ENCODE measurements at regions of chr2 and their contacts with region 1.

Region 1: GRCh38 chr2:83196225-83196624 is 1262.9 kb downstream of the SUCLG1 start:
- DNase-seq: peak; percentile 1
- ATAC-seq: peak; percentile 77
- H3K4me3 ChIP-seq: no peak overlapping the region
- H3K27ac ChIP-seq: no peak overlapping the region
- H3K4me1 ChIP-seq: no peaks in the 10 kb centered on the region
- H3K27me3 ChIP-seq: no peaks in the 10 kb centered on the region
- CTCF ChIP-seq: peak; percentile 27 to 68 (median 43); a peak in 5 of 6 replicates
- POLR2A ChIP-seq: no peak
- RAD21 ChIP-seq: peak; percentile 61

Region 2: GRCh38 chr2:81901011-81901410 is 1295.2 kb before region 1 on chr2:
- CTCF ChIA-PET with region 1: interaction called, 3 read pairs
- POLR2A ChIA-PET with region 1: no interaction called
- RAD21 ChIA-PET with region 1: no interaction called
- intact Hi-C with region 1: loop called (anchors 10 kb)
- DNase-seq: no peak
- ATAC-seq: no peak
- H3K4me3 ChIP-seq: no peak overlapping the region
- H3K27ac ChIP-seq: no peak overlapping the region
- H3K4me1 ChIP-seq: no peaks in the 10 kb centered on the region
- H3K27me3 ChIP-seq: no peaks in the 10 kb centered on the region
- CTCF ChIP-seq: peak; percentile 12 to 51 (median 34); a peak in 5 of 6 replicates
- POLR2A ChIP-seq: no peak
- RAD21 ChIP-seq: peak; percentile 37; the same call in 1 of the 2 replicates

Region 3: GRCh38 chr2:83042053-83042452 is 154.2 kb before region 1 on chr2:
- CTCF ChIA-PET with region 1: no interaction called
- POLR2A ChIA-PET with region 1: no interaction called
- RAD21 ChIA-PET with region 1: no interaction called
- intact Hi-C with region 1: no loop called
- DNase-seq: no peak
- ATAC-seq: no peak
- H3K4me3 ChIP-seq: no peak overlapping the region
- H3K27ac ChIP-seq: no peak overlapping the region
- H3K4me1 ChIP-seq: no peaks in the 10 kb centered on the region
- H3K27me3 ChIP-seq: no peaks in the 10 kb centered on the region
- CTCF ChIP-seq: no peak
- POLR2A ChIP-seq: no peak
- RAD21 ChIP-seq: no peak

Region 4: GRCh38 chr2:83085869-83086268 is 110.4 kb before region 1 on chr2:
- CTCF ChIA-PET with region 1: no interaction called
- POLR2A ChIA-PET with region 1: no interaction called
- RAD21 ChIA-PET with region 1: no interaction called
- intact Hi-C with region 1: no loop called
- DNase-seq: no peak
- ATAC-seq: no peak
- H3K4me3 ChIP-seq: no peak overlapping the region
- H3K27ac ChIP-seq: no peak overlapping the region
- H3K4me1 ChIP-seq: no peaks in the 10 kb centered on the region
- H3K27me3 ChIP-seq: no peaks in the 10 kb centered on the region
- CTCF ChIP-seq: no peak
- POLR2A ChIP-seq: no peak
- RAD21 ChIP-seq: no peak

Region 5: DNA sequence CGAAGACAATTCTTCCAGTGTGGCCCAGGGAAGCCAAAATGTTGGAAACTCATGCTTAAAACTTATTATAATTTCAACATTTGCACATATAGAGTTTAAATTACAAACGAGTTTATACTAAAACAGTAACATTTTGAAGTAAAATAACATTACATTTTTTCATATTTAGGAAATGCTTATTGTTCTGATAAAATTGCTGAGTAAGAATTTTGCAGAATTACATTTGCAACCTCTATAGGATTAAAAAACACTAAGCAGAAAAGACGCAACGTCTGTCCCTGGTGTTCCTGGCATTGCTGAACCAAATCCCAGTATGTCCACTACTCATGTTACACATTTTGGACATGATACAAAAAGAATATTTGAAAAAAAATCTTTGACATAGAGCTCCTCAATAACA is 21.6 kb after region 1 on chr2:
- CTCF ChIA-PET with region 1: no interaction called
- POLR2A ChIA-PET with region 1: no interaction called
- RAD21 ChIA-PET with region 1: no interaction called
- intact Hi-C with region 1: no loop called
- DNase-seq: no peak
- ATAC-seq: no peak
- H3K4me3 ChIP-seq: no peak overlapping the region
- H3K27ac ChIP-seq: no peak overlapping the region
- H3K4me1 ChIP-seq: no peaks in the 10 kb centered on the region
- H3K27me3 ChIP-seq: no peaks in the 10 kb centered on the region
- CTCF ChIP-seq: no peak
- POLR2A ChIP-seq: no peak
- RAD21 ChIP-seq: no peak

Region 6: DNA sequence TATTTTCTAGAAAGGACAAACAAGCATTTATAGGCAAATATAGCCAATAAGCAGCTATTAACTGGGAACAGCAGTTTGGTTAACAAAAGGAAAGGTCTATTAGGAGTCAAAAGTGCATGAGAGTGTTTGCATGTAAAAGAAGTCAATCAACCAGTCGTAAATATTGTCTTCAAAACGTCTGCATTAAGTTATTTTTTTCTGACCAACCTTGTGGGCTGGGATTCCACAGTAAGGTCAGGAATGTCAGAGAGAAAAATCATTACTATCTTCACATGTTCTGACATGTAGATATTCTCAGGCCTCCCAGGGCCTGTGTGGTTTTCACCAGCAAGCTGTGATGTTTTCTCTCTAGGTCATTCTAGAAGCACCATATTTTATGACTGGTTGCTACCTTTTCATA is 340.3 kb after region 1 on chr2:
- CTCF ChIA-PET with region 1: no interaction called
- POLR2A ChIA-PET with region 1: no interaction called
- RAD21 ChIA-PET with region 1: no interaction called
- intact Hi-C with region 1: no loop called
- DNase-seq: no peak
- ATAC-seq: no peak
- H3K4me3 ChIP-seq: no peak overlapping the region
- H3K27ac ChIP-seq: no peak overlapping the region
- H3K4me1 ChIP-seq: no peaks in the 10 kb centered on the region
- H3K27me3 ChIP-seq: no peaks in the 10 kb centered on the region
- CTCF ChIP-seq: no peak
- POLR2A ChIP-seq: no peak
- RAD21 ChIP-seq: no peak

Measured in HCT116 (cell line).